Activated CD4-positive, alpha-beta T cell treated with anti-CD3 and anti-CD28 coated beads for 36 hours (primary cell): ENCODE measurements at regions of chr3 and their contacts with region 1.

Region 1: GRCh38 chr3:139111392-139112229 is 66.9 kb upstream of the PRR23C start:
- DNase-seq: peak; percentile 84
- ATAC-seq: peak; percentile 62
- H3K4me3 Mint-ChIP-seq: no peak overlapping the region
- H3K27ac Mint-ChIP-seq: no peak overlapping the region
- H3K4me1 Mint-ChIP-seq: peaks cover 4% of the 10 kb centered on the region
- H3K27me3 Mint-ChIP-seq: peaks cover 15% of the 10 kb centered on the region

Region 2: DNA sequence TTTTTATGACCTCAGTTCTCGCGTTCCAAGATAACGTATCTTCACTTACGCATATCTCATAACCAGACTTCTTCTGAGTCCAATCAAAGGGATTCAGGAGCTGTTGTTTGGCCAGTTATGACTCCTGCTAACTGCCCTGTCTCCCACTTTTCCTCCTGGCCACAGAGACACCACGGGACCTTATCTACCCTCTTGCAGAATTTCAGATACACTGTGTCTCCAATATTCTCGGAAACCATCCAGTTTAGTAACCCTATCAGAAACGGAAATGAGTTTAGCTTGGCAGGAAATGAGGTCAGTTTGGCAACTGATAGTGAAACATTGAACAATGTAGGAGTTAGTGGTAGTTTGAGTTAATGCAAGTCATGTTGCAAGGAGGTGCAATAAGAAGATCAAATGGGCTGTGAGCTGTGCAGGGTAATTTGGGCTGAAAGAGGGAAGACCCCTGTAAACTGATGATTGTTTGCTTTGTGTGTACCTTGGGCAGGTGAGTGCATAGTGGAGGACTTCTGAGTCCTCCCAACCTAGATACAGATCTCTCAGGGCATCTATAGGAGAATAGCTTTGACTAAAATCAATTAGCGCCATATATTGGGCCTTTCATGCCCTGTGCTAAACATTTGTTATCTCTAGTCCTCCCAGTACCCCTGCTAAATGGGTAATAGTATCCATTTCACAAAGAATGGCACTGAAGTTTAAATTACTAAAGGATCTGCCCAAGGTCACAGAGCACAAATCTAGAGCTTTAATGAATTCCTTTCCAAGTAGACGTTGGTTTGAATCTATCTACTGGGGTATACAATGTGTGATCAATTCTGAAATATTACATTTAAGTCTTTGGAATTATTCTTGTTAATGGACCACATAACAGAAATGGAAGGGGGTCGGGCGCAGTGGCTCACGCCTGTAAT is 235.6 kb before region 1 on chr3:
- CTCF ChIA-PET with region 1: no interaction called
- POLR2A ChIA-PET with region 1: no interaction called
- intact Hi-C with region 1: no loop called
- DNase-seq: no peak
- ATAC-seq: peak; percentile 88
- H3K4me3 Mint-ChIP-seq: no peak overlapping the region
- H3K27ac Mint-ChIP-seq: peak overlapping the region; percentile 21
- H3K4me1 Mint-ChIP-seq: peaks cover 8% of the 10 kb centered on the region
- H3K27me3 Mint-ChIP-seq: no peaks in the 10 kb centered on the region

Region 3: DNA sequence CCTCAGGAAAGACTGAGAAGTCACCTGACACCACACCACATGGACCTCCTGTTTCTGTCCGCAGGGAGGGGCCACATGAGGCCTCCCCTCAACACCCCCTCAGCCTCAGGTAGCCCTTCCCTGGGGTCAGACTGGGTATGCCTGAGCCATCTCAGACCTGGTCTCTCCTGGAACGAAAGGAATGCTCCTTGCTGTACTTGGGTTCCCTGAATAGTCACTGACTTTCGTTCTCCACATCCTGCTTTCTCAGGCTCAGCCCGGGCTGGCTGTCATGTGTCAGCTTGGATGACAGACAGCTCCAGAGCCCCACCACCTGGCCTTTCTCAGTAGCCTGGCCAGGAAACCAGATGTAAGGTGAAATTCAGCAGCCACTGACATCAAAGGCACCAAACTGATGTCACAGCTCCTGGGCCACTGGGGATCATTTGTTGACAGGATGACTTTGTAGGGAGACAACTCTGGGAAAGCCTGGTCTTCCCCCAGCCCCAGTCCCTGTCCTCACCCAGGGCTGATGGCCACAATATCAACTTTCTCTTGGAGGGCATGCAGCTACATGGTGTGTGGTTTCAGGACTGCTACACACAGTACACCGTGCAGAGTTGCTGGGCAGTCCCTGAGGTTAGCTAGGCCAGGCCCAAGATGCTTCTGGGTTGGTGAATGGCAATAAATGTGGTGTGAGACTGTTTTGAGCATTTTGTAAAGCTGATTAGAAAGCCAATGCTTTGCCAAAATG is 90.8 kb after region 1 on chr3:
- CTCF ChIA-PET with region 1: no interaction called
- POLR2A ChIA-PET with region 1: no interaction called
- intact Hi-C with region 1: loop called in 1 of 2 experiments (anchors 5 kb)
- DNase-seq: peak; percentile 41
- ATAC-seq: no peak
- H3K4me3 Mint-ChIP-seq: no peak overlapping the region
- H3K27ac Mint-ChIP-seq: no peak overlapping the region
- H3K4me1 Mint-ChIP-seq: no peaks in the 10 kb centered on the region
- H3K27me3 Mint-ChIP-seq: peaks cover 8% of the 10 kb centered on the region

Region 4: DNA sequence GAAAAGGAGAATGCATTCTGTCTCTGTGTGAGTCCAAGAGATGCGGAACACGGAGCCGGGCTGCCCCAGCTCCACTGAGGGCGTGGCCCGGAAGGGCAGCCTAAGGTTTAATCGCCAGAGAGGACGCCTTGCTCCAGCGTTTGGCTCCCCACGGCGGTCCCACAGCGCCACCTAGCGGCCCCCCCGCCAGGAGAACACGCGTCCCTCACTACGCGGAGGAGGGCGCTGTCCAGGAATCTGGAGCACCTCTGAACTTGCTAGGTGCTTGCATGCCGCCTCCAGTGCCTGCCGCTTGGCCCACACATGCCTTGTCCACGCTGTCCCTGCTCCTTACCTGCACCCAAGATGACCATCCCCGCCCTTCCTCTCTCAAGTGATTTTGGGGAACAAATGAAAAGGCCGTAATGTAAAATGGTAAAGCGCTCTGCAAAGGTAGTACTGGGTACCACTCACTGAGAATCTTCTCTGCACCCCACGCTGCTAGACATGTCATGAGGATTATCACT is 217.8 kb after region 1 on chr3:
- CTCF ChIA-PET with region 1: interaction called, 26 read pairs
- POLR2A ChIA-PET with region 1: no interaction called
- intact Hi-C with region 1: loop called (anchors 2 kb)
- DNase-seq: peak; percentile 95
- ATAC-seq: peak; percentile 98
- H3K4me3 Mint-ChIP-seq: peak overlapping the region; percentile 25
- H3K27ac Mint-ChIP-seq: no peak overlapping the region
- H3K4me1 Mint-ChIP-seq: peaks cover 7% of the 10 kb centered on the region
- H3K27me3 Mint-ChIP-seq: peaks cover 19% of the 10 kb centered on the region